MCF 10A (cell line): ENCODE measurements at regions of chr3 and their contacts with region 1.

Region 1: GRCh38 chr3:6799264-6799915 is 61.5 kb upstream of the GRM7 start:
- DNase-seq: peak; percentile 38
- H3K4me3 Mint-ChIP-seq: no peak overlapping the region
- H3K27ac Mint-ChIP-seq: no peak overlapping the region
- H3K4me1 Mint-ChIP-seq: no peaks in the 10 kb centered on the region
- H3K27me3 Mint-ChIP-seq: peaks cover 12% of the 10 kb centered on the region
- CTCF ChIP-seq: peak; percentile 70

Region 2: GRCh38 chr3:5226783-5227182 is 1572.6 kb before region 1 on chr3:
- CTCF ChIA-PET with region 1: no interaction called
- POLR2A ChIA-PET with region 1: no interaction called
- intact Hi-C with region 1: loop called (anchors 10 kb)
- DNase-seq: peak; percentile 13
- H3K4me3 Mint-ChIP-seq: no peak overlapping the region
- H3K27ac Mint-ChIP-seq: no peak overlapping the region
- H3K4me1 Mint-ChIP-seq: no peaks in the 10 kb centered on the region
- H3K27me3 Mint-ChIP-seq: no peaks in the 10 kb centered on the region
- CTCF ChIP-seq: no peak

Region 3: GRCh38 chr3:5304789-5305683 is 1494.4 kb before region 1 on chr3:
- CTCF ChIA-PET with region 1: no interaction called
- POLR2A ChIA-PET with region 1: no interaction called
- intact Hi-C with region 1: loop called (anchors 1 kb)
- DNase-seq: peak; percentile 63
- H3K4me3 Mint-ChIP-seq: no peak overlapping the region
- H3K27ac Mint-ChIP-seq: no peak overlapping the region
- H3K4me1 Mint-ChIP-seq: no peaks in the 10 kb centered on the region
- H3K27me3 Mint-ChIP-seq: no peaks in the 10 kb centered on the region
- CTCF ChIP-seq: peak; percentile 53

Region 4: DNA sequence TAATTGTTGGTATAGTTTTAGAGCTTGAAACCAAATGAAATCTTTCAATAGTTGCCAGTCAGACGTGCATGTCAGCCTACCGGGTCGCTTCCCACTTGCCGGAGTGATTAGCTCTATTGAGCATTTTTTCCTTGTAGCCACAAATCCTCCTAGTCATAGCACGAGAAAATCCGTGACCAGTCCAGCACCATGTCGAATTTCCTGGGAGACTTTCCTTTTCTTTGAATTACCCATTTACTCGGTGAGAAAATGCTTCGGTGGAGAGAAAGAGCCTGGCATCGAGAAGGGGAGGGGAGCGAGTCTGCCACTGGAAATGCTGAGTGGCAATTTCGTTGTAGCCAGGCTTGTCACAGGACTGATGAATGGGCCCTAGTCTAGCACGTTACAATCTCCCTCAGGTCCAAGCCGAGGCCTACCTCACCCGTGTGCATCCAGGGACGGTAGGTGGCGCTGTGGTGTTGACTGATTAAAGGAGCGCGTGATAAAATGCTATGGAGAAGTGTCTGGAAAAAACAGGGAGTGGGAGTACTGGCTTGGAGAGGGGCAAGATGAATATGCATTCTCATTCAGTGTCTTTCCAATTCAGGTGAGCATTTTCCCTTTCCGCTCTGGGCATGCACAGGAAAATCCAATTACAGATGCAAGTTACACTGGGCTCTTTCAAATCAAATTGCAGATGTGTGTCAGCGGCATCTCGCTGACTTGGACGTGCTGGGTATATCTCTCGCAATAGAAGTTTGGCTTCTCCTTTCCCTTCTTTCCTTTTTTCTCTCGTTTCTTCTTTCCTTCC is 1373.1 kb before region 1 on chr3:
- CTCF ChIA-PET with region 1: interaction called, 6 read pairs
- POLR2A ChIA-PET with region 1: no interaction called
- intact Hi-C with region 1: loop called (anchors 1 kb)
- DNase-seq: peak; percentile 77
- H3K4me3 Mint-ChIP-seq: no peak overlapping the region
- H3K27ac Mint-ChIP-seq: no peak overlapping the region
- H3K4me1 Mint-ChIP-seq: peaks cover 16% of the 10 kb centered on the region
- H3K27me3 Mint-ChIP-seq: peaks cover 11% of the 10 kb centered on the region
- CTCF ChIP-seq: peak; percentile 88

Region 5: GRCh38 chr3:5787861-5788488 is 1011.4 kb before region 1 on chr3:
- CTCF ChIA-PET with region 1: interaction called, 3 read pairs
- POLR2A ChIA-PET with region 1: no interaction called
- intact Hi-C with region 1: loop called (anchors 5 kb)
- DNase-seq: peak; percentile 16
- H3K4me3 Mint-ChIP-seq: no peak overlapping the region
- H3K27ac Mint-ChIP-seq: no peak overlapping the region
- H3K4me1 Mint-ChIP-seq: no peaks in the 10 kb centered on the region
- H3K27me3 Mint-ChIP-seq: no peaks in the 10 kb centered on the region
- CTCF ChIP-seq: peak; percentile 40

Region 6: DNA sequence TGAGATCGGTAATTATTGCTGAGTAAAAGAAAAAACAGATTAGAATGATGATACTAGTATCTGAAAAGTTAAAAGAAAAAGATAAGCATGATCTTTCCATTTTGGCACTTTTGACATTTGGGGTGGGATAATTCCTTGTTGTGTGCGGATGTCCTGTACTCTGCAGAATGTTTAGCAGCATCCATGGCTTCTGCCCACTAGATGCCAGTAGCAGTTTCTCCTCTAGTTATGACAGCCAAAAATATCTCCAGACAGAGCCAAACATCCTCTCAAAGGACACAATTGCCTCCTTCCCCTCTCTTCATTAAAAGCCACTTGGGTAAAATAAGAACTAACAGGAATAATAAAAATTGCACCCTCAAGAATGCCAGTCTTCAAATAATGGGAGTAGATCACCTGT is 407.3 kb before region 1 on chr3:
- CTCF ChIA-PET with region 1: interaction called, 4 read pairs
- POLR2A ChIA-PET with region 1: no interaction called
- intact Hi-C with region 1: loop called (anchors 1 kb)
- DNase-seq: no peak
- H3K4me3 Mint-ChIP-seq: no peak overlapping the region
- H3K27ac Mint-ChIP-seq: no peak overlapping the region
- H3K4me1 Mint-ChIP-seq: no peaks in the 10 kb centered on the region
- H3K27me3 Mint-ChIP-seq: peaks cover 16% of the 10 kb centered on the region
- CTCF ChIP-seq: peak; percentile 20

Region 7: DNA sequence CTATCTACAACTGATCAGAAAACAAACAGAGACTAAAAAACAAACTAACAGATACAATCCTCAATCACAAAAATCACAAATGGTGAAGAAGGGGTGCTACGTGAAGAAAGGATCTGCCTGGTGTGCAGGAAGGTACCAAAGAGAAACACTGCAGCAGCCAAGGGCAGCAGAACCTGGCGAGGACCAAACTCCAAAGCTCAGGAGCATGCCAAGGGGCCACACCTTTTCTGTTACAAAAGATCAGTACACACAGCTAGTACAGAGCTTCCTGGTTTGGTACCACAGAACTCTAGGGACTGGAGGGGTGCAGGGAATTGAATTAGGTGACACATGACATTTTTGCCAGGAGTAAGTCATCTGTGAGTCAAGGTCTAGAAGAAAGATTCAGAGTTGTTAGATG is 45.9 kb before region 1 on chr3:
- CTCF ChIA-PET with region 1: no interaction called
- POLR2A ChIA-PET with region 1: no interaction called
- intact Hi-C with region 1: no loop called
- DNase-seq: no peak
- H3K4me3 Mint-ChIP-seq: no peak overlapping the region
- H3K27ac Mint-ChIP-seq: no peak overlapping the region
- H3K4me1 Mint-ChIP-seq: no peaks in the 10 kb centered on the region
- H3K27me3 Mint-ChIP-seq: peaks cover 10% of the 10 kb centered on the region
- CTCF ChIP-seq: no peak